ENCODE measurements at regions of chr4 and their contacts with region 1.

Region 1: DNA sequence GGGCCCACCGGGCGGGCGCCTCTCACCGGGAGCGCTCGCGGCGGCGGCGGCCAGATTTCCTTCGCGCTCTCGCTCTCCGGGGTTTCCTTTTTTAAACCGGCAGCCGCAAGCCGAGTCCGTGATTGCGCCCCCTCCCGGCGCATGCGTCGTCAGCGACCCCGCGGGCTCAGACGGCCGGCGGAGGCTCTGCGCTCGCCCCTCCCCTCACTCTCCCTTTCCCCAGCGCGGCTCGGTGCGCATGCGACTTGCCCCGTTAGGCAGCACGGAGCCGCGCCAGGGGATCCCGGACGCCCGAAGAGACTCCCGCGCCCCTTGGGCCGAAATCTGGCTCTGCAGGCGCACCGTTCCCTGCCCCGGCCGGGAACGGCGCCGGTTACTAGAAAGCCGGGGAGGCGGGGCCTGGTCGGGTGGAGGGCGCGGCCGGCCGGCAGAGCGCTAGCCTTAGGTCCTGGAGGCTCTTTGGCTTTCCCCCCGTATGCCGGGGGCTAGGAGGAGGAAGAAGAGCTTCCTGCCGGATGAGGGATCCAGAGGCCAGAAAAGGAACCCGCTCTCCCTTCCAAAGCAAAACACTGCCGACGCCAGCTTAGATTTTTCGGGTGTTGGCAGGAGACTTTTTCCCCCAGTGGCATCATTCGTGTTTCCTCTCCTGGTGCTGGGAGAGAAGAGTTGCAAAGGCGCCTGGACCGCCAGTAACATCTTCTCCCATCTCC is at the start of gene CLOCK:
- DNase-seq: peak; percentile 88 to 95 (median 92)
- ATAC-seq: peak; percentile 76 to 93 (median 92)
- H3K4me3 ChIP-seq: peak within 1 kb of the TSS; percentile 73 to 99 (median 95)
- H3K27ac ChIP-seq: peak within 1 kb of the TSS; percentile 97 to 99 (median 99)
- H3K4me1 ChIP-seq: peaks cover 0 to 31% (median 17%) of the 10 kb centered on the region in 12 donors
- H3K27me3 ChIP-seq: no peaks in the 10 kb centered on the region
- CTCF ChIP-seq: peak; percentile 41 to 81 (median 66)
- POLR2A ChIP-seq: peak in 1 of 2 donors; percentile 75
- total RNA-seq, gene CLOCK: 27.3 to 42.1 (median 33.2) TPM

Region 2: GRCh38 chr4:55291227-55291640 is 255.7 kb before region 1 on chr4:
- intact Hi-C with region 1: no loop called
- DNase-seq: peak in 4 of 5 donors; percentile 14 to 77 (median 62)
- ATAC-seq: peak; percentile 72 to 89 (median 78)
- H3K4me3 ChIP-seq: no peak overlapping the region
- H3K27ac ChIP-seq: no peak overlapping the region
- H3K4me1 ChIP-seq: peaks cover 0 to 7% (median 0%) of the 10 kb centered on the region in 12 donors
- H3K27me3 ChIP-seq: no peaks in the 10 kb centered on the region
- CTCF ChIP-seq: no peak
- POLR2A ChIP-seq: no peak

Region 3: DNA sequence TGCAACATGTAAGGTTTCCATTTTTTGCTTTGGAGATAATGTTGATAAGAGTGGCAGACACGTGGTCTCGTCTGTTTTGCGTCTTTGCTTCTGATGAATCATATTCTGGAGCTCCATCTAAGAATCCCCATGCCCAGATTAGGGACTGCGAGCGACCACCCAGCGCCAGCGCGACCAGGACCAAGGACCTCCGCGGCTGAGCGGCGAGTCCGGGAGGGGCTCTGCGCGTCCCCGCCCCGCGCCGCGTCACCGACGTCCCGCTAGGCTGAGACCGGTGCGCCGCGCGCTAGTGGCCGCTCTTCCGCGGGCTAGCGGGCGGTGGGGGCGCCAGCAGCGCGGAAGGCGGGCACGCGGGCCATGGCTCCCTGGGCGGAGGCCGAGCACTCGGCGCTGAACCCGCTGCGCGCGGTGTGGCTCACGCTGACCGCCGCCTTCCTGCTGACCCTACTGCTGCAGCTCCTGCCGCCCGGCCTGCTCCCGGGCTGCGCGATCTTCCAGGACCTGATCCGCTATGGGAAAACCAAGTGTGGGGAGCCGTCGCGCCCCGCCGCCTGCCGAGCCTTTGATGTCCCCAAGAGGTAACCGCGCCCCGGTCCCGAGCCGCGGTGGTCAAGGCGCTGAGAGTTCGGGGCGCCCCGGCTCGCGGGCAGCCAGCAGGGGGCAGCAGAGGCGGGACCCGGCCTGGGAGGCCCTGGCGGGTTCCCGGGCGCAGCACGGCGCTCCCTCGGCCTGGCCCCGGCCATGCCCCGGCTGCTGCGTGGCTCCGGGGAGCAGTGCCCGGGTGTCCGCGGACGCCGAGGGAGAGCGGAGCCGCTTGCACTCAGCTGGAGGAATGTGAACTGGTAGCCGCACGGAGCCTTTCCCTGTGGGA is 200.7 kb before region 1 on chr4 and contains the start of gene SRD5A3:
- intact Hi-C with region 1: loop called (anchors 1 to 10 kb)
- DNase-seq: peak; percentile 86 to 94 (median 88)
- ATAC-seq: peak; percentile 94 to 98 (median 96)
- H3K4me3 ChIP-seq: peak within 1 kb of the TSS; percentile 48 to 97 (median 80)
- H3K27ac ChIP-seq: peak within 1 kb of the TSS; percentile 89 to 100 (median 98)
- H3K4me1 ChIP-seq: peaks cover 4 to 31% (median 16%) of the 10 kb centered on the region in 12 donors
- H3K27me3 ChIP-seq: no peaks in the 10 kb centered on the region
- CTCF ChIP-seq: peak; percentile 90 to 99 (median 98)
- POLR2A ChIP-seq: peak in 1 of 2 donors; percentile 72
- total RNA-seq, gene SRD5A3: 4.5 to 16.8 (median 7.8) TPM

Region 4: DNA sequence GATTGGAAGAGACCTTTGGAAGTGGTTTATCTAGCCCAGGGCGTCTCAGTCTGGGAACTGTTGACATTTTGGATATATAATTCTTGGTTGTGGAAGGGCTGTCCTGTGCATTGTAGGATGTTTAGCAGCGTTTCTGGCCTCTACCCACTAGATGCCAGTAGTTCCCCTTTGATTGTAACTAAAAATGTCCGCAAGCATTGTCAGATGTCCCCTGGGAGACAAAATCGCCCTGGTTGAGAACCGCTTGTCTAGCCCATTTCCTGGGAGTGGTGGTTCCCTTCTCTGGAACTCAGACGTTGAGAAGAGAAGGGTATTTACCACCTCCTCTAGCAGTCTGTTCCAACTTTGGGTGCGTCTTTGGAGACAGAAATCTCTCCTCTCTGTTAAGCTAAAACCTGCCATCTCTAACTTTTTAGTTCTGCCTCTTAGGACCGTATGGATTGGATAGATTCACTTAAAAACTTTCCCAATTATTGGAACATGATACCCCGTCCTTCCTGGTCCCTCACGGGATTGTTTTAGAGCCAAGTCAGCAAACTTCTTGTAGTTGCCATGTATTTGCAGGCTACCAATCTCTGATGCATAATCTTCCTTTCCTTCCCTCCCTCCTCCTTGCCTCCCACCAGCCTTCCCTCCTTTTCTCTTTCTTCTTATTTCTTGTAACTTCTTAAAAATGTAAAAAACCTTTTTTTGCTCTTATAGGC is 137.3 kb before region 1 on chr4:
- intact Hi-C with region 1: loop called in 1 of 10 experiments (anchors 10 kb)
- DNase-seq: peak in 4 of 5 donors; percentile 38 to 50 (median 44)
- ATAC-seq: peak; percentile 55 to 76 (median 72)
- H3K4me3 ChIP-seq: peak overlapping the region in 4 of 12 donors; percentile 4 to 22 (median 8)
- H3K27ac ChIP-seq: peak overlapping the region in 9 of 12 donors; percentile 8 to 45 (median 21)
- H3K4me1 ChIP-seq: peaks cover 9 to 65% (median 22%) of the 10 kb centered on the region in 12 donors
- H3K27me3 ChIP-seq: no peaks in the 10 kb centered on the region
- CTCF ChIP-seq: peak in 11 of 12 donors; percentile 14 to 58 (median 39)
- POLR2A ChIP-seq: no peak

Region 5: DNA sequence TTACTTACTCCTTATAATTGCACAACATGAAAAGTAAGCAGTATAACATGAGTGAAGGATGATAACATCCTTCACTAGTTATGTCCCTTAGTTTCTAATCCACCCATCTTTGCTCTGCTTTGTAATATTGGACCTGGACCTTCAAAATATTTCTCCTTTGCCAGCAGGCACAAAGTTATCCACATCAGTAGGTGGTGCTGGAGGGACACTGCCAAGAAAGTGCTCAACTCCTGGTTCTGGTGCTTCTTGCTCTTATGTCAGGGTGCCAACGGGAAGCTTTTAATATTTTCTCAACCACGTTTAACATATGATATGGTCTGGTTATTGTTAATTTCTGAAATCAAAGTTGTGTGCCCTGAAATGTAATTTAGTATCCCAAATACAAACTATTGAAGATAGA is 102.1 kb before region 1 on chr4:
- intact Hi-C with region 1: loop called in 4 of 10 experiments (anchors 10 kb)
- DNase-seq: no peak
- ATAC-seq: peak in 1 of 4 donors; percentile 42
- H3K4me3 ChIP-seq: no peak overlapping the region
- H3K27ac ChIP-seq: no peak overlapping the region
- H3K4me1 ChIP-seq: peaks cover 0 to 5% (median 0%) of the 10 kb centered on the region in 12 donors
- H3K27me3 ChIP-seq: no peaks in the 10 kb centered on the region
- CTCF ChIP-seq: peak in 7 of 12 donors; percentile 9 to 28 (median 11)
- POLR2A ChIP-seq: no peak

Region 6: GRCh38 chr4:55675196-55675793 is 128.4 kb after region 1 on chr4:
- intact Hi-C with region 1: no loop called
- DNase-seq: no peak
- ATAC-seq: no peak
- H3K4me3 ChIP-seq: no peak overlapping the region
- H3K27ac ChIP-seq: no peak overlapping the region
- H3K4me1 ChIP-seq: no peaks in the 10 kb centered on the region
- H3K27me3 ChIP-seq: peaks cover 0 to 3% (median 0%) of the 10 kb centered on the region in 9 donors
- CTCF ChIP-seq: no peak
- POLR2A ChIP-seq: no peak

Region 7: GRCh38 chr4:55853484-55854046 is 306.7 kb after region 1 on chr4 and contains the start of gene EXOC1:
- intact Hi-C with region 1: loop called in 6 of 10 experiments (anchors 5 to 10 kb)
- DNase-seq: peak; percentile 98 to 99 (median 99)
- ATAC-seq: peak; percentile 100
- H3K4me3 ChIP-seq: peak within 1 kb of the TSS; percentile 55 to 98 (median 91)
- H3K27ac ChIP-seq: peak within 1 kb of the TSS; percentile 64 to 92 (median 87)
- H3K4me1 ChIP-seq: peaks cover 3 to 30% (median 18%) of the 10 kb centered on the region in 12 donors
- H3K27me3 ChIP-seq: no peaks in the 10 kb centered on the region
- CTCF ChIP-seq: no peak
- POLR2A ChIP-seq: peak in 1 of 2 donors; percentile 68
- total RNA-seq, gene EXOC1: 15.2 to 27.7 (median 21.4) TPM

Region 8: GRCh38 chr4:55948726-55949474 is 402.0 kb after region 1 on chr4 and contains the start of gene CEP135:
- intact Hi-C with region 1: loop called in 1 of 10 experiments (anchors 2 kb)
- DNase-seq: peak; percentile 95 to 97 (median 96)
- ATAC-seq: peak; percentile 94 to 98 (median 98)
- H3K4me3 ChIP-seq: peak within 1 kb of the TSS; percentile 32 to 88 (median 84)
- H3K27ac ChIP-seq: peak within 1 kb of the TSS; percentile 83 to 96 (median 92)
- H3K4me1 ChIP-seq: peaks cover 0 to 48% (median 13%) of the 10 kb centered on the region in 12 donors
- H3K27me3 ChIP-seq: no peaks in the 10 kb centered on the region
- CTCF ChIP-seq: peak; percentile 90 to 100 (median 96)
- POLR2A ChIP-seq: peak in 1 of 2 donors; percentile 38
- total RNA-seq, gene CEP135: 2.3 to 6.3 (median 2.5) TPM